ENCODE measurements at regions of chr11 and their contacts with region 1.

Region 1: GRCh38 chr11:34565417-34566207 is 52.0 kb upstream of the ELF5 start:
- DNase-seq: peak; percentile 43
- ATAC-seq: peak; percentile 57
- H3K4me3 Mint-ChIP-seq: no peak overlapping the region
- H3K27ac Mint-ChIP-seq: no peak overlapping the region
- H3K4me1 Mint-ChIP-seq: no peaks in the 10 kb centered on the region
- H3K27me3 Mint-ChIP-seq: peaks cover 34% of the 10 kb centered on the region

Region 2: DNA sequence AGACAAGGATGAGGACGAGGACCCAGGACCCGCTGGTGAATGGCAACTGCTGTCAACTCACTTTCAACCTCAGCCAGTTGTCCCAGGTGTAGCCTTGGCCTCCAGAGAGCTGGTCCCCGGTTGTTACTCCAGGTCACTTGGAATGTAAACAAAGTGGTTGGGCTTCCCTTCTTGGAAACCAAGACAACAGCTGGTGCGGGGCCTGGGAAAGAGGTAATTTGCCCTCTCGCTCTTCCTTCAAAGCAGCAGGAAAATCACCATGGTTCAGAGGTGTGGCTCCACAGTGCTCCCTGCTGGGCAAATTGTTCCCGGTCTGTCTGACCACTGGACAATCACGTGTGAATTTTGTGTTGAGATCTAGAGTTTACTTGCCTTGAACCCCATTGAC is 838.8 kb after region 1 on chr11:
- CTCF ChIA-PET with region 1: no interaction called
- POLR2A ChIA-PET with region 1: no interaction called
- intact Hi-C with region 1: loop called in 1 of 2 experiments (anchors 5 kb)
- DNase-seq: peak; percentile 43
- ATAC-seq: no peak
- H3K4me3 Mint-ChIP-seq: no peak overlapping the region
- H3K27ac Mint-ChIP-seq: no peak overlapping the region
- H3K4me1 Mint-ChIP-seq: peaks cover 1% of the 10 kb centered on the region
- H3K27me3 Mint-ChIP-seq: peaks cover 1% of the 10 kb centered on the region

Measured in activated CD4-positive, alpha-beta T cell treated with anti-CD3 and anti-CD28 coated beads for 36 hours (primary cell).